Posterior vena cava (tissue), 2 donors: ENCODE measurements at regions of chr17 and their contacts with region 1.

Region 1: GRCh38 chr17:64129764-64130558 is at the start of gene ERN1:
- DNase-seq: peak; percentile 98
- total RNA-seq, gene ERN1: 17.2 to 18.6 TPM

Region 2: DNA sequence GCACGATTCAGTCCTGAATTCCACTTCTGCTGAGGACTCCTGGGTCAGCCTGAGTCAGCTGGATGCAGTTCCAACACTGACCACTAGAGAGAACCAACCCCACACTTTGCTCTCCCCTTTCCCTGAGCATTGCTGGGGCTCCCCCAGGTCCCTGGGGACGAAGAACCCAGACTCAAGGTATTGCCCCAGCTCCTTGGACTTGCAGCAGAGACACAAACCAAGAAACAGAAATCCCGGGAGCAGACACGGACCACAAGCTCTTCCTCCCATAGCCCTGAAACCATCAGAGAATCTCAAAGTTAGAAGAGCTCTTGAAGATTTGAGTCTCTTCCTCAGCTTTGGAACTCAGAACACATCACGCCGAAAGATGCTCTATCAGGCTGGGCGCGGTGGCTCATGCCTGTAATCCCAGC is 210.6 kb before region 1 on chr17:
- intact Hi-C with region 1: loop called (anchors 5 to 10 kb)
- DNase-seq: no peak

Region 3: GRCh38 chr17:64025732-64026294 is 104.1 kb before region 1 on chr17:
- intact Hi-C with region 1: loop called (anchors 1 to 2 kb)
- DNase-seq: peak; percentile 92

Region 4: DNA sequence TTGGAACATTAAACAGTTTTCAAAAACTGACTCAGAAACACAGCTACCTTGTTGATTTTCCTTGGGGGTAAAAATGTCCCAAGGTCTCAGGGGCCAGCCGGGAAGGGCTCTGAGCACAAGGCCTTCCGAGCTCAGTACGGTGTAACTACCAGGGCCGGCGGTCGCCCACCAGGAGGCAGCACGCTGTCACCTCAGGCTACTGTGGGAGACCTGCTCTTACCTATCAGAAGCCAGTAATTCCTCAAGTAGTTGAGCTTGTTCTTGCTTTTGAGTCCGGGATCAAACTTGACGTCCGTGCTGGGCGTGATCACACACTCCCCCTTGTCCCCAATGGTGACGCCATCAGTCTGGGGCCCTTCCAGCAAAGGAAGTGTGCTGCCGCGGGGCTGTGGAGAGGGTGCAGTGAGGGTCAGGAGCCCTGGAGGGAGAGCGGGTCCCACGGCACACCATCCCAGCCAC is 66.2 kb before region 1 on chr17:
- intact Hi-C with region 1: loop called in 1 of 2 experiments (anchors 5 kb)
- DNase-seq: no peak

Region 5: DNA sequence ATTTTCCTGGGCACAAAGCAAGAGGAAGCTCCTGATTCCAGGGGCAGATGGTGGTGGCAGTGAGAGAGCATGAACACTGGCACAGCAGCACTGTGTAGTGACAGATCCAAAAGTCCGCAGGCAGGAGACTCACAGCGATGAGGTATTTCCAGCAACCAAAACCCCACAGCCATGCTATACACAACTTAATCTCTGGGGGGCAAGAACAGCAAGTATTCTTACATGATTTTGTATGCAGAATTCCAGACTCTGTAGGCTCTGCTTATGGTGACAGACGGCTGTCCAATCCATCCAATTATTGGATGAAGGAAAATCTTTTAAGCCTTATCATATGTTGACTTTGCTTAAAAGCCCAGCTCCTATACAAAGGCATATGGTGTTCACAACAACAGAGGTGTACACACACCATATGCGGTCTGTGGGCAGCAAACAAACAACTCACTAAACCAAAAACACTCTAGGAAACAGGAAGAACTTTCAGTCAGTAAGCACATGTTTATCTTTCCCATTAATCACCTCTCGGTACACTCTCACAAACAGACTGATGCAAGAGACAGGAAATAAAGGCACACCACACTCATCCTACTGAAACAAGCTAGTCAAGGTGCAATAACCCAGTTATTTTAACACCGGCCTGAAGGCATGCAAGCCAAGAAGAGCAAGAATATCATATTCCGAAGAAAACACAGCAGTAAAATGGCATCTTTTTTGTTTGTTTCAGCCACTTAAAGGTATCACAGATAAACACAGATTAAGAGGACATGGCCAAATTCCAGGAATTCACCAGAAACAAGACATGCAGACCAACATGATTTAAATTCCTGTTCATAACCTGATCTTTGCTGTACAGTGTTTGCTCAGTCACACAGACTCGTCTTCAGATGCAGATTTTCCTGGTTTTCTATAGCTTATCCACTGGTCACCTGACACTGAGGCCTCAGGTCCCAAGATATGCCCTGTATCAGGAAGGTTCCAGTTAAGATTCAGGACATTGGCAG is 47.9 kb before region 1 on chr17:
- intact Hi-C with region 1: loop called in 1 of 2 experiments (anchors 5 kb)
- DNase-seq: no peak

Region 6: GRCh38 chr17:64281962-64282727 is 152.2 kb after region 1 on chr17:
- intact Hi-C with region 1: loop called in 1 of 2 experiments (anchors 10 kb)
- DNase-seq: no peak

Region 7: DNA sequence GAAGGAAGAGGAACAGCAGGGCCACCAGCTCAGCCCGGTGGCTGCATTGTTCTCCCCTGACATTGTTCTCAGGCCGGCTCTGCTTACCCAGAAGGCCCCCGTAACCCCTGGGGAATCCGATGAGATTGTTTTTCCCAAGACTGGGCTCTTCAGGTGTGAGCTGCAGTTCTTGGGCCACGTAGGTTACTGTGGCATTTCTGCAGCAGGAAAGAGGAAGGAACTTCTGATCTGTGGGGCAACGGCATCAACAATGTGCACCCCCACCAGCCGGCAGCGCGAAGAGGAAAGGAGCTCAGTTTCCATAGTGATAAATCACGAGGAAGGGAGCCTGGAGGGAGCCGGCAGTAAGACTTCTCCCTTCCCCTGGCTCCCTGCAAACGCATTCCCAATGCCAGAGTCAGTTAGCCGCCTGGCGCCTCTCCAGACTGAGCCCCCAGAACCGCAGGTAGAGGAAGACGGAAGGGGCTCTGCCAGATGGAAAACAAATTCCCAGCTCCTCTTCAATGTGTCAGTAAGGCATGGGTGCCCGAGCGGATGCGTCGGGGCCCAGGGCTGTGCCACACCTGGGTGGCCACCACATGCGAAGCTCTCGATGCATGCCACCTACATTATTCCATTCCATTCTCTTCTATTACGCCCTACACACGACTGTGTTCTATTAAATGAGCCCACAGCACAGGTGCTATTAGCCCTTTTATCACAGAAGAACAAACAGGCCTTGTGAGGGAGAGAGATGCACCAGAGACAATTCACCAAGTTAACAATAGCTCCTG is 282.2 kb after region 1 on chr17:
- intact Hi-C with region 1: no loop called
- DNase-seq: peak; percentile 90